ENCODE measurements at regions of chr14 and their contacts with region 1.

Region 1: GRCh38 chr14:61196792-61197191 is 84.3 kb downstream of the TMEM30B start:
- H3K4me3 Mint-ChIP-seq: no peak overlapping the region
- H3K27ac Mint-ChIP-seq: no peak overlapping the region
- H3K4me1 Mint-ChIP-seq: no peaks in the 10 kb centered on the region
- H3K27me3 Mint-ChIP-seq: peaks cover 48% of the 10 kb centered on the region

Region 2: GRCh38 chr14:60945984-60946383 is 250.8 kb before region 1 on chr14:
- intact Hi-C with region 1: no loop called
- H3K4me3 Mint-ChIP-seq: peak overlapping the region; percentile 37
- H3K27ac Mint-ChIP-seq: peak overlapping the region; percentile 79
- H3K4me1 Mint-ChIP-seq: peaks cover 13% of the 10 kb centered on the region
- H3K27me3 Mint-ChIP-seq: no peaks in the 10 kb centered on the region

Region 3: DNA sequence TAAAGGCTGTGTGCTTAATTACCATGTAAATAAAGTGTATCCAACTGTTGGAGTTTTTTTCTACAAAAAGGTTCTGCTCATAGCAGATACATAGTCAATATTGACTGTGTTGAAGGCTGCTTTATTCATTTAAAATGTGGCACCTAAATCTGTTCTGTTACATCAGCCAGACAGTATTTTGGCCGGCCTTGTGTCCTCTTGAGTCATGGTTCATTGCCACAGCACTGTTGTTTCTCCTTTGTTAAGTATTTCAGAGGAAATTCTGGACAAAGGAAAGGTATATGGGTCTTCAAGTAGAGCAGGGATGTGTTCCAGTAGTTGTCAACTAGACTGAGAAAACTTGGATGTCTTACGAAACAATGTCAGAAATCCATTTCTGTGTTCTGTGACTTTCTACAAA is 120.2 kb before region 1 on chr14:
- intact Hi-C with region 1: loop called (anchors 10 kb)
- H3K4me3 Mint-ChIP-seq: no peak overlapping the region
- H3K27ac Mint-ChIP-seq: no peak overlapping the region
- H3K4me1 Mint-ChIP-seq: peaks cover 22% of the 10 kb centered on the region
- H3K27me3 Mint-ChIP-seq: no peaks in the 10 kb centered on the region

Region 4: DNA sequence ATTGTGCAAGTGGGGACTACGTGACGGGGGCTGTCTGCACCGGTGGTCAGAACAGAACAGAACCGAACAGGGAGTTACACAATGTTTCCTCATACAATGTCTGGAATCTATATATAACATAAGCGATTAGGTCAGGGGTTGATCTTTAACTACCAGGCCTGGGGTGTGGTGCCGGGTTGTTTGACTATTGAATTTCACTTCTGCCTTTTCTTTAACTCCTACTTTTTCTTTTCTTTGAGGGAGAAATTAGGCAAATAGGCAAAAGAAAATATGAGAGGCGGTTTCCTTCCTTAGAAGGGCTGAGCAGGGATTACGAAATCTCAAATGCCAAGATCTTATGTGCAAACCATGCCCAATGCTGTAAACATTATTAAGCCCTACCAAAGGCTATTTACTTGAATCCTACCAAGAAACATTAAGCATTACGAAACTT is 75.4 kb before region 1 on chr14:
- intact Hi-C with region 1: no loop called
- H3K4me3 Mint-ChIP-seq: no peak overlapping the region
- H3K27ac Mint-ChIP-seq: peak overlapping the region; percentile 60
- H3K4me1 Mint-ChIP-seq: peaks cover 36% of the 10 kb centered on the region
- H3K27me3 Mint-ChIP-seq: peaks cover 6% of the 10 kb centered on the region

Region 5: DNA sequence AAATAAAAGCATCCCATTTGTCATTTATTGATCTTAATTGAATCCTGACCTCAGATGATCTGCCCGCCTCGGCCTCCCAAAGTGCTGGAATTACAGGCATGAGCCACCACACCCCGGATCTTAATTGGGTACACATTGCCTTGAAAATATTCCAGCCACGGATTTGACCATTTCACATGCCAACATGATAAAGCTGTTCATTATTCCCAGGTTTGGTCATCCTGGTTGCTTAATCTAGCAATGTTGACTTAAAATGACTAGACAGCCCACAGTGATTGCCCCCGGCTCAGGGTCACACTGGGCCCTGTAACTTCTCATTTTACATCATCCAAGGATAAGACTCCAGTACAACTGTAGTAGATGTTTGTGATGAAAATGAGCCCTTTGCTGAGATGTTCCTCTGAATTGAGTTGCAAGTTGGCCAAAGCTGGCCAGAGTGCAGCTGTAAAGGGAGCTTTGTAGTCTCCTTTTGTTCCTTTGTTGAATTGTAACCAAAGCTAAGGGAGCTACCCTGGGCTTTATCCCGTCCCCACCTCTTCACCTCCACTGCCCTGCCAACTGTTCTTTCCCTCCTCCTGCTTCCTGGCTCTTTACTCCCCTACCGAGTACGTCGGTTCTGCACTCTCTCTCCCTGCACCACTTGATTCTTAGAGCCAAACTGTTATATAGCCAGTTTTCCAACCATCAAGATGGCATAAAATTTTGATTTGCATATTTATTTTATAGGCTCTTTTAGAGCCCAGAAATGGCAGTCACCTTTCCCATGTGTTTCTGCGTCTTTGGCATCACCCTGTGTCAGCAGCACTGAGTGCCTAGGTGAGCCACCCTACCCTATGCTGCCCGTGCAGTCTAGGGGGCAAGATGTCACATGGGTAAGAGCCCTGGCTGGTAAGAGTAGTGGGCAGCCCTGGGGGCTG is 357.2 kb after region 1 on chr14:
- intact Hi-C with region 1: no loop called
- H3K4me3 Mint-ChIP-seq: no peak overlapping the region
- H3K27ac Mint-ChIP-seq: peak overlapping the region; percentile 91
- H3K4me1 Mint-ChIP-seq: peaks cover 70% of the 10 kb centered on the region
- H3K27me3 Mint-ChIP-seq: no peaks in the 10 kb centered on the region